KBM-7 (cell line): ENCODE measurements at regions of chr9 and their contacts with region 1.

Region 1: GRCh38 chr9:36847781-36848673 is 186.0 kb downstream of the PAX5 start:
- DNase-seq: no peak

Region 2: DNA sequence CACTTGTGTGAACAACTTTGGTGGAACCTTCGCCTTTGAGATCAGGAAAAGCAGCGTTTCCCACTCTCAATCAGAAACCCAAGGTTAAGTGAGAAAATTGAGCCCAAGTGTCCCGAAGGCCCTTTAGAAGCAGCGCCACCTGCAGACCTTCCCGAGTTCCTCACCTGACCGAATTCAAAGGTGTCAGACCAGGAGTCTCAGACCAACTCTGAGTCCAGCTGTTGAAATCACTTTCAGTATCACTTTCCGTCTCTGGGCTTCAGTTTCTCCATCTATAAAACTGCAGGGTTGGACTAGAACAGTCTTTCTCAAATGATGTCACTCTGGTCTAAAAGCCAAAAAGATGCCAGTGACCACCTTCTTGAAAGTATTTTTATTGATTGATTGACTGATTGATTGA is 542.7 kb after region 1 on chr9:
- in situ Hi-C with region 1: loop called (anchors 25 kb)
- DNase-seq: peak; percentile 35